Gastrocnemius medialis (tissue), 4 donors: ENCODE measurements at regions of chr11 and their contacts with region 1.

Region 1: GRCh38 chr11:63635762-63636465 is 21.7 kb upstream of the PLAAT3 start:
- DNase-seq: peak in 1 of 2 donors; percentile 40
- ATAC-seq: peak; percentile 60 to 66
- H3K4me3 ChIP-seq: no peak overlapping the region
- H3K27ac ChIP-seq: no peak overlapping the region
- H3K4me1 ChIP-seq: no peaks in the 10 kb centered on the region
- H3K27me3 ChIP-seq: no peaks in the 10 kb centered on the region
- CTCF ChIP-seq: peak; percentile 61 to 76 (median 68)
- POLR2A ChIP-seq: no peak

Region 2: GRCh38 chr11:63478896-63479295 is 157.0 kb before region 1 on chr11:
- in situ Hi-C with region 1: loop called (anchors 5 kb)
- intact Hi-C with region 1: loop called (anchors 1 kb)
- DNase-seq: peak; percentile 18 to 41
- ATAC-seq: peak; percentile 85 to 90
- H3K4me3 ChIP-seq: no peak overlapping the region
- H3K27ac ChIP-seq: no peak overlapping the region
- H3K4me1 ChIP-seq: no peaks in the 10 kb centered on the region
- H3K27me3 ChIP-seq: no peaks in the 10 kb centered on the region
- CTCF ChIP-seq: peak; percentile 80 to 92 (median 86)
- POLR2A ChIP-seq: no peak

Region 3: GRCh38 chr11:63599211-63600122 is 36.4 kb before region 1 on chr11:
- in situ Hi-C with region 1: no loop called
- intact Hi-C with region 1: loop called (anchors 5 kb)
- DNase-seq: no peak
- ATAC-seq: no peak
- H3K4me3 ChIP-seq: no peak overlapping the region
- H3K27ac ChIP-seq: no peak overlapping the region
- H3K4me1 ChIP-seq: peaks cover 21 to 26% of the 10 kb centered on the region in 2 donors
- H3K27me3 ChIP-seq: no peaks in the 10 kb centered on the region
- CTCF ChIP-seq: no peak
- POLR2A ChIP-seq: no peak

Region 4: DNA sequence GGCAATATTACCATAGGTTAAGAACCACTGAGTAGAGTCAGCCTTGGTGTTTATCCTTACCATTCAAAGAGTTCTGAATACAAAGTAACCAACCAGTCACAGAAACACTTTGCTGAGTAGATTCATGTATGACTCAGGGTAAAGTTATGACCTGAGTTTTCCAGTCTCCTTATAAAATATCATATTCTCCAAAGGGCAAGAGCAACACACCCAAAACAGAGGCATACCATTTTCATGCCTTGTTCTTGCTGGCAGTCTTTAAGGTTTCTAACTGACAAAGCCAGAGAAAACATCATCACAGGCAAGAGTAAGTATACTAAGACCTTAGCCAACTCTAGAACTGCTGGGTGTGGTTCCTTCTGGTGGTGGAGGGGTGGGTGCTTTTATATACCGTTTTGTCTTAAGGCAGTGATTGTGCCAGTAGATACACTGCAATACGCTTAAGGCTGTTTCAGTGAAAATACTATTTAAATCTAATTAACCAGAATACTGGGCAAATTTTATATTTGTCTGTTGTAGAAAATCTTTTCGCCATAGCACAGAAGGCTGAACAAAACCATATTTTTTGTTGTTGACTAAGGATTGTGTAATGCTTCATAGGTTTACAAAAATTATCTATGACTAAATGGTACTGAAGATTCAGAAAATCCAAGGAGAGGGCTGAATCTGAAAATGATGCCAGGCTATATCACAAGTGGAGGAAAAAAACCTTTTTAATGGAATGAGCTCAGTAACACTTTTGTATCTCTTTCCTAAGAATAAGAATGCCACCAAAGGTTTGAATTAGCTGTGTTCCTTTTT is 32.3 kb after region 1 on chr11:
- in situ Hi-C with region 1: no loop called
- intact Hi-C with region 1: no loop called
- DNase-seq: no peak
- ATAC-seq: no peak
- H3K4me3 ChIP-seq: no peak overlapping the region
- H3K27ac ChIP-seq: peak overlapping the region in 1 of 4 donors; percentile 39
- H3K4me1 ChIP-seq: peaks cover 50 to 58% of the 10 kb centered on the region in 2 donors
- H3K27me3 ChIP-seq: no peaks in the 10 kb centered on the region
- CTCF ChIP-seq: no peak
- POLR2A ChIP-seq: no peak